ENCODE measurements at regions of chr2 and their contacts with region 1.

Region 1: DNA sequence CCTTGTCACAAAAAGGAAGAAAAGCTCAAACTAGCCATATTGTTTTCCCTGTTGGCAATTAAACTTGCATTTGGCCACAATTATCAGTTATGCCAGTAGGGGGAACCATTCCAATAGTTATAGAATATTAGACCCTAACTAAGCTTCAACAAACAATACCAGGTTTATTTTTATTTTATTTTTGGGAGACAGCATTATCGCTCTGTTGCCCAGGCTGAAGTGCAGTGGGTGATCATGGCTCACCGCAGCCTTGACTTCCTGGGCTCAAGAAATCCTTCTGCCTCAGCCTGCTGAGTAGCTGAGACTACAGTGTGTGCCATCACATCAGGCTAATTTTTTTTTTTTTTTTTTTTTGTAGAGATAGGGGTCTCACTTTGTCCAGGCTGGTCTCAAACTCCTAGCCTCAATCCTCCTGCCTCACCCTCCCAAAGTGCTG is 102.1 kb downstream of the ATAD2B start:
- DNase-seq: peak; percentile 22
- H3K4me3 Mint-ChIP-seq: no peak overlapping the region
- H3K27ac Mint-ChIP-seq: no peak overlapping the region
- H3K4me1 Mint-ChIP-seq: no peaks in the 10 kb centered on the region
- H3K27me3 Mint-ChIP-seq: no peaks in the 10 kb centered on the region

Region 2: DNA sequence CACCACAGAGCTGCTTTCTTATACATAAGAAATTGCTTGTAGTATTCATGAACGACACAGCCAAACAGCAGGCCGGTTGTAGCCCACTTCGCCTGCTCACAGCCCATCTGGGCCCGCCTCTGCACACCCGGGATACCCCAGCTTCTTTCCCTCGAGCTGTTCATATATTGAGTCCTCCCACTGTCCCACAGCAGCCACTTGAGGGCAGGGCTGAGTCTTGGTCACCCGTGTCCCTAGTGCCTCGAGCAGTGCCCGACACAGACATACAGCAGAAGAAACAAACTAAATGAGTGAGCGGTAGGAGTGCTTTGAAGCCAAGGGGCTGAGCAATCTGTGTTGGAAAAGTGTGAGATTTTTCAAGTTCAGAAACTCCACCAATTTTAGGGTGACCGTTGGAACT is 188.4 kb before region 1 on chr2:
- CTCF ChIA-PET with region 1: no interaction called
- DNase-seq: no peak
- H3K4me3 Mint-ChIP-seq: no peak overlapping the region
- H3K27ac Mint-ChIP-seq: no peak overlapping the region
- H3K4me1 Mint-ChIP-seq: no peaks in the 10 kb centered on the region
- H3K27me3 Mint-ChIP-seq: no peaks in the 10 kb centered on the region

Region 3: DNA sequence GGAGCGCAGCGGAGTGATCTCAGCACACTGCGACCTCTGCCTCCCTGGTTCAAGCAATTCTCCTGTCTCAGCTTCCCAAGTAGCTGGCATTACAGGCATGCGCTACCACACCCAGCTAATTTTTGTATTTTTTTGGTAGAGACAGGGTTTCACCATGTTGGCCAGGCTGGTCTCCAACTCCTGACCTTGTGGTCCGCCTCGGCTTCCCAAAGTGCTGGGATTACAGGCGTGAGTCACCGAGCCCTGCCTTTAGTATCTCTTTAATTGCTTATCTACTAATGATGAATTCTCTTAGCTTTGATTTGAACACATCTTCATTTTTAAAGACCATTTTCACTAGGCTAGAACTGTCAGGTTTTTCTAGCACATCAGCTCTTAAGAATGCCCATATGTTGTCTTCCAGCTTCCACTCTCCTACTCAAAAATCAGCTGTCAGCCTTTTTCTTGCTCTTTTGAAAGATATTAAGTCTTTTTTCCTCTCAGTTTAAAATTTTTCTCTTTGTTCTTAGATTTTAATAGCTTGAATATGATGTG is 169.0 kb after region 1 on chr2:
- CTCF ChIA-PET with region 1: no interaction called
- DNase-seq: no peak
- H3K4me3 Mint-ChIP-seq: no peak overlapping the region
- H3K27ac Mint-ChIP-seq: no peak overlapping the region
- H3K4me1 Mint-ChIP-seq: no peaks in the 10 kb centered on the region
- H3K27me3 Mint-ChIP-seq: no peaks in the 10 kb centered on the region

Region 4: DNA sequence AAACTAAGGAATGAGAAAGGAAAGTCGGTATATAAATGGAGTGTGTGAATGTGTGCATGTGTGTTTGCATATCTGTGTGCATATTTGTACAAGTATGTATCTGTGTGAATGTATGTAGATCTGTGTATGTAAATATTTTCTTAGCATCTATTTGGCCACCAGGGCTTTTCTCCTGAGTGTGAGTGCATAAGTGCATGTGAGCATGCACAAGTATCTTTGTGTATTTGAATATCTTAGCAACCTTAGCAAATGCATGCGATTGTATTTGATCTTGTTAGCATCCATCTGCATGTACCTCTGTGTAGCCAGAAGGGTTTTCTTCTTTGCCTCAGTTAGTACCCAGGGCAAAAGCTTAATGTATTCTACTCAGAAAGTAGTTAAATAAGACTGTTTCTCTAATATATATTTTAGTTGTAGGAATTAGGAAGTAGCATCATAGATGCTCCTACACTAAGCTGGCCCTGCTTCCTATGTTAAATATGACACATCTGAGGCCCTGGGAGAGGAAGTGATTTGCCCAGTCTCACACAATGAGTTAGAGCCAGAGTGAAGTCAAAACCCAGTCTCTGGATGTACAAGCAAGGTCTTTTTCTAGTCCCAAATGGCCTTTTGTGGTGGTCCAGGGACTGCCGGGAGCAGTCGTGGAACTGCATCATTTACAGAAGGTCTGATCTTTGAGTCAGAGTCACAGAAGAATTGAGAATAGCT is 233.9 kb after region 1 on chr2:
- CTCF ChIA-PET with region 1: interaction called, 15 read pairs
- DNase-seq: no peak
- H3K4me3 Mint-ChIP-seq: no peak overlapping the region
- H3K27ac Mint-ChIP-seq: no peak overlapping the region
- H3K4me1 Mint-ChIP-seq: no peaks in the 10 kb centered on the region
- H3K27me3 Mint-ChIP-seq: peaks cover 9% of the 10 kb centered on the region

Region 5: GRCh38 chr2:24084386-24085361 is 259.9 kb after region 1 on chr2 and contains the start of gene TP53I3:
- CTCF ChIA-PET with region 1: interaction called, 43 read pairs
- DNase-seq: peak; percentile 84
- H3K4me3 Mint-ChIP-seq: peak within 1 kb of the TSS; percentile 90
- H3K27ac Mint-ChIP-seq: peak within 1 kb of the TSS; percentile 93
- H3K4me1 Mint-ChIP-seq: peaks cover 16% of the 10 kb centered on the region
- H3K27me3 Mint-ChIP-seq: no peaks in the 10 kb centered on the region

Region 6: GRCh38 chr2:24568551-24568950 is 743.8 kb after region 1 on chr2:
- CTCF ChIA-PET with region 1: no interaction called
- DNase-seq: no peak
- H3K4me3 Mint-ChIP-seq: no peak overlapping the region
- H3K27ac Mint-ChIP-seq: no peak overlapping the region
- H3K4me1 Mint-ChIP-seq: no peaks in the 10 kb centered on the region
- H3K27me3 Mint-ChIP-seq: no peaks in the 10 kb centered on the region